Dorsolateral prefrontal cortex (tissue), 120 donors: ENCODE measurements at regions of chr10 and their contacts with region 1.

Region 1: DNA sequence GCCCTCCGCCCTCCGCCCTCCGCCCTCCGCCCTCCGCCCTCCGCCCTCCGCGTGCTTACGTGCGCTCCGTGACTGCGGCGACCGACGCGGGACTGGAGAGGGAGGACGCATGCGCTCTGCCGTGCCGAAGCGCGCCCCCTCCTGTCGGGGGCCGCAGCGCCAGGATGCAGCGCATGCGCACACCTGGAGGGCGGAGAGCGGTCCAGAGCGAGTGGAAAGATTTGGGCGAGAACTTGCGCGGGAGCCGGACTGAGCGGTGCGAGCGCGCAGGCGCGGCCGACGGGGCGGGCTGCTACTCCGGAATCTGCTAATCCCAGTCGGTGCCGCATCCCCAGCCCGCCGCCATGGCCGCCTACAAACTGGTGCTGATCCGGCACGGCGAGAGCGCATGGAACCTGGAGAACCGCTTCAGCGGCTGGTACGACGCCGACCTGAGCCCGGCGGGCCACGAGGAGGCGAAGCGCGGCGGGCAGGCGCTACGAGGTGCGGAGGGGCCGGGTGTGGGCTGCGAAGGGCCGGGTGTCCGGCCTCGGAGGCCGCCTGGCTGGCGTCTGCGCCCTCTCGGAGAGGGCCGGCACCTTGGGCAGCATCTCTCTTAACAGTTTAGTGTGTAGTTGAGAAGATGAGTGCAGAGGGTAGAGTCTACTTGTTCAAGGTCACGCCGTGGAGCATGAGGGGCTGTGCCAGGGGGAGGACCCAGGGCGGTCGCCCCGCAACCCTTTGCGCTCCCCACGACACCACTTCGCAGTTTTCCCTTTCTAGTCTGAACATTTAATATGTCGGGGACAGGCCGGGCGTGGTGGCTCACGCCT is at the start of gene PGAM1:
- DNase-seq: peak; percentile 88 to 97 (median 94)
- H3K4me3 ChIP-seq: peak within 1 kb of the TSS; percentile 58 to 99 (median 95)
- H3K27ac ChIP-seq: peak within 1 kb of the TSS; percentile 58 to 96 (median 90)
- H3K27me3 ChIP-seq: no peaks in the 10 kb centered on the region
- CTCF ChIP-seq: peak; percentile 46 to 80 (median 68)
- total RNA-seq, gene PGAM1: 155 to 477 (median 341) TPM

Region 2: GRCh38 chr10:97400665-97401454 is 25.3 kb before region 1 on chr10 and contains the start of gene RRP12:
- intact Hi-C with region 1: loop called in 1 of 2 experiments (anchors 2 kb)
- DNase-seq: peak; percentile 42 to 95 (median 86)
- H3K4me3 ChIP-seq: peak within 1 kb of the TSS; percentile 63 to 98 (median 88)
- H3K27ac ChIP-seq: peak within 1 kb of the TSS in 46 of 59 donors; percentile 2 to 82 (median 58)
- H3K27me3 ChIP-seq: no peaks in the 10 kb centered on the region
- CTCF ChIP-seq: peak in 27 of 56 donors; percentile 7 to 47 (median 23)
- total RNA-seq, gene RRP12: 21.1 to 88.1 (median 42.7) TPM

Region 3: GRCh38 chr10:97407211-97407951 is 18.8 kb before region 1 on chr10:
- intact Hi-C with region 1: loop called in 1 of 2 experiments (anchors 1 kb)
- DNase-seq: peak in 6 of 10 donors; percentile 40 to 67 (median 50)
- H3K4me3 ChIP-seq: peak overlapping the region in 19 of 59 donors; percentile 1 to 49 (median 22)
- H3K27ac ChIP-seq: peak overlapping the region in 15 of 59 donors; percentile 0 to 56 (median 30)
- H3K27me3 ChIP-seq: no peaks in the 10 kb centered on the region
- CTCF ChIP-seq: peak; percentile 56 to 87 (median 76)

Region 4: DNA sequence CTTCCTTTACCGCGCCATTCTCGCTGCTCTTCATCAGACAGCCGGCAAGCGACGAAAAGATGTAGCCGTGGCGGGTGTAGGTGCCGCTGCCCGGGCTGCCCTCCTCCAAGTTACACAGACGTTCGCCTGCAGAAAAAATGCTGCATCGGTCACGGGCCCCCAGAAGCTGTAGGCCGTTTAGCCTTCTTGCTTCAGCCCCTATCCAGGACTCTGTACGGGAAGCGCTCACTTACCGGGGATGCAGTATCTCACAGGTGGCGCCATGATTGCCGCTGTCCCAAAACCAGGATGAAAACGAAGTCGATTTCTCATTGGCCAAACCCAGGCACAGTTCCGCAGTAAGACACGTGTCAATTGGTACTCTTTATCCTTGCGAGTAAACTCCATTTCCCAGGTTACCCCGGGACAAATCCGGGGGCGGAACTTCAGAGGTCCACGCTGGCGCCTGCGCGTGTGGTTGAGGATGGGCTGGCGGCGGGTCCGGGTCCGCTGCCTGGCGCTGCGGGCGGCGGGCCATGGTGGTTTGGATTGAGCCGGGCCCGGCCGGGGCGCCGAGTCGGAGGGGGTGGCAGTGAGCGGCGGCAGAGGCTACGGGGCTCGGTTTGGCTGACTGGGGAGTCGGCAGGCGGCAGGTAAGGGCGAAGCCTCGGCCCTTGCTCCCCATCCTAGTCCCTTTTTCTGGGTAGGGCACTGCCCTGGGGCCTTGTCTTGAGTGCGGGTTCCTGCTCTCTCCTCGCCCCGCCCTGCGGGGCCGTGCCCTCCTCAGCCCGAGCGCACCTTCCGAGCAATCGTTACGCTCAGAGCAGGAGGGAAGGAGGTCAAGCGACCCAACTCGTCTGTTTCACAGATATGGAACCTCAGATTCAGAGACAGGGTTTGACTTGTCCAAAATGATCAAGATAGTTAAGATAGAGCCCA is 19.8 kb after region 1 on chr10 and contains the starts of genes EXOSC1 and ZDHHC16:
- intact Hi-C with region 1: loop called (anchors 1 kb)
- DNase-seq: peak; percentile 85 to 99 (median 97)
- H3K4me3 ChIP-seq: peak within 1 kb of the TSS; percentile 71 to 100 (median 93)
- H3K27ac ChIP-seq: peak within 1 kb of the TSS in 51 of 59 donors; percentile 2 to 91 (median 74)
- H3K27me3 ChIP-seq: no peaks in the 10 kb centered on the region
- CTCF ChIP-seq: peak in 53 of 56 donors; percentile 22 to 76 (median 54)
- total RNA-seq, gene EXOSC1: 23.5 to 46.9 (median 33.8) TPM
- total RNA-seq, gene ZDHHC16: 22.2 to 46.8 (median 31.1) TPM

Region 5: DNA sequence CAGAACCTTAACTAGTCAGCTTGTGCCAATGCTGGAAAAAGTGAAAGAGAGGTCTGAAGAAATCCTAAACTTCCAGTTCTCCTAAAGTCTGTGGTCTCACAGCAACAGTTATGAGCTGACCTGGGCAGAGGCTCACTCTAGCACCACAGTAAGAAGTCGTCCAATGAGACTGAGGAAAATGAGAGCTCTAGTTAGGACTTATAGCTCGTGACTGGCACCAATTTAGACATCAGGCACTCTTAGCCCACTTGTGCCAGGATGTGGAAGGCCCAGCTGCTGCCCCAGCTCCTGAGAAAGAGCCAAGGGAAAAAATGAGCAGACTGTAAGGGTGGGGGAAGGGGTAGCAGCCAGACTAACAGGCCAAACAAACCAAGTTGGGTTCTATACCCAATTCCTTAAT is 64.4 kb after region 1 on chr10:
- intact Hi-C with region 1: no loop called
- DNase-seq: peak in 8 of 10 donors; percentile 20 to 65 (median 56)
- H3K4me3 ChIP-seq: peak overlapping the region in 27 of 59 donors; percentile 0 to 34 (median 18)
- H3K27ac ChIP-seq: peak overlapping the region; percentile 42 to 95 (median 89)
- H3K27me3 ChIP-seq: no peaks in the 10 kb centered on the region
- CTCF ChIP-seq: peak in 1 of 56 donors; percentile 10